GM18951 (cell line): ENCODE measurements at regions of chr21 and their contacts with region 1.

Region 1: DNA sequence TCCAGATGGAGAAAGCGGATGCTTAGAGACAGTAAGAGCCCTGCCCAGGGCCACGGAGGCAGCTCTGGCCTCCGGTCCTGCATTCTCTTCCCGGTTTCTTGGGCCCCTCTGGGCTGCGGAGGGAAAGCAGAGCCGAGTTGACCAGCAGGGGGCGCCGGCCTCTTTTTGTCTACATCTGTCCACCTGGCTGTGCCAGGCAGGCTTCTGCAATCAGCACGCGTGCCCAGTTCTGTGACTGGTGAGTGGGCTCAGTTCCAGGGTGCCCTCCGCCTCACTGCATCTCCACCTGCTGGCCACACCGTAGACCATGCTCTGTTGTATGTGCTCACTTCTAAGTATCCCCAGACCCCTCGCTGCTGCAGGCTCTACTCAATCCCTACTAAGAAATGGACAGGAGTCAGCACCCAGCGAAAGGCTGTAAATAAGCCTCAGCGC is 6.7 kb upstream of the HUNK start:
- POLR2A ChIP-seq: no peak

Region 2: DNA sequence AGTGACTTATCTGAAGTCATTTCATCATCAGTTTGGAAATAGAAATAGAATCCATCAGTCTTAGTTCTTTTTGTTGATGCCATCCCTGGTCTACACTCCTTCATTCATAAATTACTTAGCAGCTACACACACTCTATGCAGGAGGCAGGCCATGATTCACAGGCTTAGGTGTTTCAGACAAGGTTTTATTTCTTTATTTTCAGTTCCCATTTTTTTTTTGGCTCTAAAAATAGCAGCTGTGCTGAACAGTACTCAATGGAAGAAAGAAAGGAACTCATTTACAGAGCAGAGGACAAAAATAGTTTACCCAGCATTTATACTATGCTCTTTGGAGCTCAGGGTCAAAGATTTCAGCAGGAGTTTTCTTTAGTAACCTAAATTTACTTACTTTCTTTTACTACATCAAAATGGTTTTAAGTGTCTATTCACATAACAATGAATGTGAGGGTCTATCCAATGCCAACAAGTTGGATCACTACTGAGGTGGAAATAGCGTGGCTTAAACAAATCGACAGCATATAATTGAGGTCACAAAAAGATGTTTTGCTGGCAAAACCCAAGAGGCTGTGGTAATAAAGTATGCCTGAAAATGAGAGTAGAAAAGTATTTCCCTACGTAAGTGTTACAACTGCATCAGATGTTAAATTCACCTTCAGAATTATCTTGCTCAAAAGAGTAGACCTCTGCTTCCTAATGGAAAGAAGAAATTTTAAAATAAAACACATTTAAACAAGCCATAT is 835.6 kb before region 1 on chr21:
- in situ Hi-C with region 1: no loop called
- POLR2A ChIP-seq: no peak

Region 3: DNA sequence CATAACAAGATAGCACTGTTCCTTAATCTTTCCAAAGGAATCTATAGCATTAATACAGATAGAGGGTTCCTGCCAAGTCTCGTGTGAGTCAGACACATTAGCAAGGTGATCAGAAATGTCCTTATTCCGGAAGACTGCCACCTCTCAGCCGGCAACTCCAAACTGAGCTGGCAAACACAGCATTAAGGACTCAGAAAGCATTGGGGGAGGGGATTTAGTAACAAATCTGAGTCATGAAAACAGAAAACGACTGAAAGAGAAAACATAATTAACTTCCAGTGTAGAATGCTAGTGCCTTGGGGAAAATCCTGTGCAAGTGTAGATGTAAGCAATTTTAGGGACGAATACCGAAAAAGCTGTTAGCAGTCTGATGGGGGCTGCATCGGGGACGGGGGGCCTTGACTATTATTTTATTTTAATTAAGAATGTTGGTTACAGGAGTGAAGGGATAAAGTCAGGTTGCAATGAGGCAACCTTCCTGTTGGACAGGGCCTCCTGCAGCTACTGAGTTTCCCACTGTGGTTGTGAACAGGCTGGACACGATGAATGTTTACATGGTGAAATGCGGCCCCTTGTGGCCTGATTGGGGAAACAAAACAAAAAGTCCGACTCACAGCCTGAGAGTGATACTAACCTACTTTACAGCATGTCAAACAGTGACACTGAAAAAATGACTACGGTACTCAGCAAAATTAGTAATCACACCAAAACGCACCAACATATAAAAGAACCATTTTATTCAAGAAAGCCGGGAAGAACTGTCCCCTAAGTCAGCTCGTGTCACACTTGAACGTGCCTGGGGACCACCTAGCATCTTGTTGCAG is 392.1 kb after region 1 on chr21:
- in situ Hi-C with region 1: loop called (anchors 25 kb)
- POLR2A ChIP-seq: no peak